ENCODE measurements at regions of chr2 and their contacts with region 1.

Region 1: GRCh38 chr2:153519257-153519875 is 40.8 kb upstream of the RPRM start:
- DNase-seq: peak in 6 of 9 donors; percentile 12 to 40 (median 17)
- ATAC-seq: peak; percentile 31
- H3K4me3 ChIP-seq: no peak overlapping the region
- H3K4me3 Mint-ChIP-seq: no peak overlapping the region
- H3K27ac ChIP-seq: no peak overlapping the region
- H3K27ac Mint-ChIP-seq: no peak overlapping the region
- H3K4me1 ChIP-seq: no peaks in the 10 kb centered on the region
- H3K4me1 Mint-ChIP-seq: no peaks in the 10 kb centered on the region
- H3K27me3 ChIP-seq: no peaks in the 10 kb centered on the region
- H3K27me3 Mint-ChIP-seq: peaks cover 0 to 25% (median 8%) of the 10 kb centered on the region in 5 donors

Region 2: DNA sequence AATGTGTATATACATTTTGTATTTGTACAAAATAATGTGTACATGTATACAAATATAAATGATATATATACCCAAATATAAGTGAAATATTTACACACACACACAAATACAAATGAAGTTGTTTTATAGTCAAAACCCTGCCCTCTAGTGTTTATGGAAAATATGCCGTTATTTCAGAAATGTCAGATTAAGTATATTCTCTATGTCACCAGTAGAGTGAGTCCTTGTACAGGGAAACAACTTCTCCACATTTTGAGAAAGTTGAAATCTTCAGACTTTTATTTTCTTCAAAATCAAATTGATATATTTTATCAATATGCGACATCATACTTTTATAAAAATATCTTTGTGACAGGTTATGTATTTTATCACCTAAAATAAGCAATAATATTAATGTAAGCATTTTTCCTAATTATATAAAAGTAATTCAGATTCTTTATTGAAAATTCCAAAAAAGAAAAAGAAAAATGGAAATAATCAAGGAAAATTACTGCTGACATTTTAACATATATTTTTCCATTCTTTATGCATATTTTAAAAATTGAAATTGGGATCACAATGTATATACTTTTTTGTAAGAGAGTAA is 778.5 kb before region 1 on chr2:
- CTCF ChIA-PET with region 1: no interaction called
- POLR2A ChIA-PET with region 1: no interaction called
- intact Hi-C with region 1: loop called (anchors 1 kb)
- DNase-seq: peak in 7 of 9 donors; percentile 13 to 53 (median 51)
- ATAC-seq: peak; percentile 93
- H3K4me3 ChIP-seq: no peak overlapping the region
- H3K4me3 Mint-ChIP-seq: no peak overlapping the region
- H3K27ac ChIP-seq: no peak overlapping the region
- H3K27ac Mint-ChIP-seq: no peak overlapping the region
- H3K4me1 ChIP-seq: no peaks in the 10 kb centered on the region
- H3K4me1 Mint-ChIP-seq: peaks cover 0 to 9% (median 3%) of the 10 kb centered on the region in 7 donors
- H3K27me3 ChIP-seq: no peaks in the 10 kb centered on the region
- H3K27me3 Mint-ChIP-seq: no peaks in the 10 kb centered on the region

Region 3: DNA sequence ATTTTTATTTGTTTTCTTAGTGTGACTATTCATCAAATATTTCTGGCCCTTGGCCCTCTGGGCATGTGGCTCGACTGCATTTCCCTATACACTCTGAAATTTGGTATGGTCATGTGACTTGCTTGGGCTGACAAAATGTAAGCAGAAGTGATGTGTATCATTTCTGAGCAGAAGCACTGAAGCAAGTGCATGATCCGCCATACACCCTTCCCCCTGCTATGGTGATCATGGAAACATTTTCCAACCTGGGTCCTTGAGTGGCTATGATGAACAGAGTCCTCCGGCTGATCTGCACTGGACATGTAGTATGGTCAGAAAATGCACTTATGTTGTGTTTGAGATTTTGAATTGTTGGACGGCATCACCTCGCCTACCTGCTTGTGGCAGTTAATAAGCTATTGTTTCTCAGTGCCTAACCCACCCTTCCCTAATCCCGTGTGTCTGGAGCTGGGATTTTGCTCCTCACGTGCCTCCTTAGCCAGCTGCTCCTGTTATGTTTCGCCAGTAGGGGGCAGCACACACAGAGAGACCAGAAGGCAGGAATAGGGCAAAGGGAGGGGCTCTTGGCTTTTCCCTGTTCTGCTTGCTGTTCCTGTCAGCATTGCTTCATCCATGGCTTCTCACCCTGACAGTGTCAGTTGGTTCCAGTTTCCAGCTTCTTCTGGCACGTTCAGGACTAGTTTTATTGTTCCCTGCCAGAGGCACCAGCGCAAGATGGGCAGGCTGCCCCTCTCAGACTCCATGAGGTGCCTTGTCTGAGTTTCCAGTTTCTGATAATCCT is 593.6 kb before region 1 on chr2:
- CTCF ChIA-PET with region 1: no interaction called
- POLR2A ChIA-PET with region 1: no interaction called
- intact Hi-C with region 1: loop called in 1 of 2 experiments (anchors 1 kb)
- DNase-seq: peak in 1 of 9 donors; percentile 40
- ATAC-seq: no peak
- H3K4me3 ChIP-seq: no peak overlapping the region
- H3K4me3 Mint-ChIP-seq: no peak overlapping the region
- H3K27ac ChIP-seq: no peak overlapping the region
- H3K27ac Mint-ChIP-seq: no peak overlapping the region
- H3K4me1 ChIP-seq: no peaks in the 10 kb centered on the region
- H3K4me1 Mint-ChIP-seq: no peaks in the 10 kb centered on the region
- H3K27me3 ChIP-seq: no peaks in the 10 kb centered on the region
- H3K27me3 Mint-ChIP-seq: peaks cover 0 to 11% (median 0%) of the 10 kb centered on the region in 5 donors

Region 4: GRCh38 chr2:153163058-153163457 is 356.3 kb before region 1 on chr2:
- CTCF ChIA-PET with region 1: no interaction called
- POLR2A ChIA-PET with region 1: no interaction called
- intact Hi-C with region 1: loop called in 1 of 2 experiments (anchors 1 kb)
- DNase-seq: no peak
- ATAC-seq: no peak
- H3K4me3 ChIP-seq: no peak overlapping the region
- H3K4me3 Mint-ChIP-seq: no peak overlapping the region
- H3K27ac ChIP-seq: no peak overlapping the region
- H3K27ac Mint-ChIP-seq: no peak overlapping the region
- H3K4me1 ChIP-seq: no peaks in the 10 kb centered on the region
- H3K4me1 Mint-ChIP-seq: no peaks in the 10 kb centered on the region
- H3K27me3 ChIP-seq: no peaks in the 10 kb centered on the region
- H3K27me3 Mint-ChIP-seq: peaks cover 0 to 5% (median 0%) of the 10 kb centered on the region in 5 donors